ENCODE measurements at regions of chr9 and their contacts with region 1.

Region 1: DNA sequence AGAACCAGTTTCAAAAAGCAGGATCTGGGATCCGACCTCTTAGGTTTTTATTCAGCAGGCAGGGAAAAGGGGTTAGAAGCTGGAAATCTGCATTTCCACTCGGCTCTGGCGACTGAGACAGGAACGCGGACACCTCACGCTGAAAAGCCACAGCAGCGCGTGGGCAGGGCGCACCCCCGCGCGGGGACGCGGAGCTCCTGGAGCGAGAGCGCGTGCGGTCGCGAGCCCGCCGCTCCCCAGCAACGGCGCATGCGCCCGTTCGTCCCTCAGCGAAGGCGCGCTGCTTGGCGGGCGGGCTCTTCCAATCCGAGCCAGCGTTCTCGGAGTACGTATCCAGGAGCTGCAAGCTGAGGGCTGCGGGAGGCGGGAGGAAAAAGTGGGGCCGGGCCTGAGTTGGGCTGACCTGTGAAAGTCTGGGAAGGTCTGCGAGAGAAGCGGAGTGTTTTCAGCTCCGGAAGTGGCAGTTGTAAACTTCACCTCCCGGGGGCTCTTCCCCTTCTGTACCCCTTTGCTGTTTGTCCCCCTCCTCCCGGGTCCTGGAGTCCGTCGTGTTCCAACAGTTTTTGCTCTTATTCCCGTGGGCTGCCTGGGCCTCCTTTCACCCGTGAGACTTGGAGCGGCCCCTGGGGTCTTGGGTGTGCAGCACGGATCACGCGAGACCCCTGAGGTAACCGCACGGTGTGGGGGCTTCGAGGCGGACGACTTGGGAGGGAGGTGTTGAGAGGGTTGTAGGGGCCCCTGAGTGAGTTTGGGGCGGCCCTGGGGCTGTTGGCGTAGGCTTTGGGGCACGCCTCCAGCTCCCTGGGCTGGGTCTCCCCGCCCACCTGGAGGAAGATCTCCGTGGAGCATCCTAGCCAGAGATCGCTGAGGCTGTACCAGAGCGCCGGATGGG is at the start of gene CCDC171:
- DNase-seq: peak; percentile 85 to 90 (median 87)
- H3K4me3 ChIP-seq: peak within 1 kb of the TSS; percentile 79 to 93
- H3K4me3 Mint-ChIP-seq: peak within 1 kb of the TSS; percentile 87 to 97 (median 96)
- H3K27ac ChIP-seq: peak within 1 kb of the TSS; percentile 45
- H3K27ac Mint-ChIP-seq: peak within 1 kb of the TSS; percentile 69 to 91 (median 87)
- H3K4me1 ChIP-seq: peaks cover 18% of the 10 kb centered on the region
- H3K4me1 Mint-ChIP-seq: peaks cover 4 to 22% (median 10%) of the 10 kb centered on the region in 4 donors
- H3K27me3 ChIP-seq: no peaks in the 10 kb centered on the region
- H3K27me3 Mint-ChIP-seq: no peaks in the 10 kb centered on the region
- total RNA-seq, gene CCDC171: 1.8 to 1.9 TPM

Region 2: DNA sequence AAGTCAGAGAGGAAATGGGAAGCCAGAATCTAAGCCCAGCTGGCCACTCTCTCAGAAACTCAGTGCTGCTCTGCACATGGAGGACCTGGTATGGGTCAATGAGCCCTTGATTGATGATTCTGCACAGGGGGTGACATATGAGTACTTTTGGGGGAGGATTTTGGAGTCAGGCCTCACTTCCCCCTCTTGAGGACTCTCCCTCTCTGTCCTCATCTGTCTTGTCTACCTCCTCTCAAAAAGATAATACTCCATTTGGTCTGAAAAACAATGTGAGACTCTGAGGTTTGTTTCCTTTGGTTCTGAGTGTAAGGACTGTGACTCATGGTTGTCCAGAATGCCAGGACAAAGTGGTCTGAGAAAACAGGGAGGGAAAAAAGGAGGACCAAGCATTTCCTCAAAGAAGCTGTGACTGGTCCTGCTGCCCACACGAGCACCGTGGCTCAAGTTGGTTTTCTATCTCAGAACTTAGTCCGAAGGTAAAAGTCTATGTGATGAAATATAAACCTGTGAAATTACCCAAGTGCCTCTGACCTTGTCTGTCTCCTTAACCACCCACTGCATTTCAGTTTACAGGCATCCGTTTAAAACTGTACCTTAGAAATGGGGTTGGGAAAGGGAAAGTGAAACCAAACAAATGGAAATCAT is 257.0 kb before region 1 on chr9:
- CTCF ChIA-PET with region 1: no interaction called
- POLR2A ChIA-PET with region 1: no interaction called
- intact Hi-C with region 1: loop called (anchors 2 kb)
- DNase-seq: peak; percentile 40 to 67 (median 57)
- H3K4me3 ChIP-seq: peak overlapping the region; percentile 31 to 46
- H3K4me3 Mint-ChIP-seq: peak overlapping the region; percentile 74 to 89 (median 85)
- H3K27ac ChIP-seq: peak overlapping the region; percentile 84
- H3K27ac Mint-ChIP-seq: peak overlapping the region; percentile 92 to 99 (median 97)
- H3K4me1 ChIP-seq: peaks cover 77% of the 10 kb centered on the region
- H3K4me1 Mint-ChIP-seq: peaks cover 61 to 87% (median 76%) of the 10 kb centered on the region in 4 donors
- H3K27me3 ChIP-seq: no peaks in the 10 kb centered on the region
- H3K27me3 Mint-ChIP-seq: no peaks in the 10 kb centered on the region

Region 3: DNA sequence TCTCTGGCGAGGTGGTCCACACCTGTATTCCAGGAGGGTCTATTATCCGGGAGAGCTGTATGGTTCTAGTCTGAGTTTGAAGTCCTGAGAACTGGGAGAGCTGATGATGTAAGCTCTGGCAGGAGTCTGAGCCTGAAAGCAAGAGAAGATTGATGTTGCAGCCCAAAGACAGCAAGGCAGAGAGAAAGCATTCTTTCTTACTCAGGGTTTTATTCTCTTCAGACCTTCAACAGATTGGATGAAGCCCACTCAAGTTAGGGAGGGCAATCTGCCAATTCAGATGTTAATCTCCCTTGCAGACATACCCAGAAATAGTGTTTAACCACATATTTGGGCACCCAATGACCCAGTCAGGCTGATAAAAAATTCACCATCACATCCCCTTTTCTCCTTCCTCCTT is 159.0 kb after region 1 on chr9:
- CTCF ChIA-PET with region 1: no interaction called
- POLR2A ChIA-PET with region 1: no interaction called
- intact Hi-C with region 1: no loop called
- DNase-seq: no peak
- H3K4me3 ChIP-seq: no peak overlapping the region
- H3K4me3 Mint-ChIP-seq: no peak overlapping the region
- H3K27ac ChIP-seq: no peak overlapping the region
- H3K27ac Mint-ChIP-seq: peak overlapping the region in 1 of 7 donors; percentile 54
- H3K4me1 ChIP-seq: no peaks in the 10 kb centered on the region
- H3K4me1 Mint-ChIP-seq: no peaks in the 10 kb centered on the region
- H3K27me3 ChIP-seq: no peaks in the 10 kb centered on the region
- H3K27me3 Mint-ChIP-seq: no peaks in the 10 kb centered on the region

Measured in CD4-positive, alpha-beta memory T cell (primary cell).